Activated naive CD4-positive, alpha-beta T cell treated with anti-CD3 and anti-CD28 coated beads, Interleukin-2, amount 10 ng/mL, durations not matched to agents 7 days and 5 days (primary cell): ENCODE measurements at regions of chr9 and their contacts with region 1.

Region 1: DNA sequence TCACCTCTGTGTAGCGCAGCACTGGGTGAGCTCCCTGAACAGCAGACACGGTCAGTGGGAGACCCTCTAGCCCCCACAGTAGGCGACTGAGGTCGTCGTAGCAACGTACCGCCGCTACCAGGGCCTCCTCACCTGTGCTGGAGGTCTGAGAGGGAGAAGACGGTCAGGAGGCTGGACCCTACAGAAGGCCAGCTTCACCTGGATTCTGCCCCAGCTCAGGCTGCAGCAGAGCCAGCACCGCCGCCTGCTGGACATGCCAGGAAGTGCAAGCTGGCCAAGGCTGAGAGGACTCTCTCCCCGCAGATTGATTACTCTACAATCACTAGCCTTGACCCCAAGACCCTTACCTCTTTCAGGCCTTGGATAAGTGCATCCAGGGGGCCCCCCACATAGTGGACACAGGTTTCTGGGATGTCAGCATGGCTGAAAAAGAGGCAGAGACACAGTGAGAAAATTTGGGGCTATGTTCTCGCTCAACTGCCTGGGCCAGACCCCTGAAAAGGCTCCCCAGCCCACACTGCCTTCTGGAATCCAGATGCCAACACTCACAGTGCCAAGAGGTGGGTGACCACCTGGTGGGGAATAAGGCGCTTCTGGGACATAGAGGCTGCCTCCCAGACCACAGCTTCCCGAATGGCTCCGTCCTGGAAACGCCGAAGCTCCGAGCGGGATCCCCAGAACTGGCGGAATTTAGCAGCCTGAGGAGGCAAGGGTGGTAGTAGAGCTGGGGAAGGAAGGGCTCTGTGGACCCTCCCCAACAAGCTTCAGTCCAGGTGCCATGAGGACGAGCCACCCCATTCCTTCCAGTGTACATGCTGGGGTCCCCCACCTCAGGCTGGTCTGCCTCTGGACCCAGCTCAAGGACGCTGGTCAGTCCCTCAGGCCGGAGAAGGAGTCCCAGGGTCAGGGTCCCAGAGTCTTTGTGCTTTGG is 6.9 kb downstream of the NOL6 start:
- DNase-seq: peak; percentile 84
- H3K4me3 Mint-ChIP-seq: no peak overlapping the region
- H3K27ac Mint-ChIP-seq: peak overlapping the region; percentile 42
- H3K4me1 Mint-ChIP-seq: peaks cover 9% of the 10 kb centered on the region
- H3K27me3 Mint-ChIP-seq: no peaks in the 10 kb centered on the region

Region 2: GRCh38 chr9:33287087-33287490 is 179.7 kb before region 1 on chr9:
- CTCF ChIA-PET with region 1: interaction called, 23 read pairs
- DNase-seq: peak; percentile 72
- H3K4me3 Mint-ChIP-seq: no peak overlapping the region
- H3K27ac Mint-ChIP-seq: peak overlapping the region; percentile 79
- H3K4me1 Mint-ChIP-seq: peaks cover 41% of the 10 kb centered on the region
- H3K27me3 Mint-ChIP-seq: peaks cover 5% of the 10 kb centered on the region

Region 3: GRCh38 chr9:33480087-33480486 is 13.3 kb after region 1 on chr9:
- CTCF ChIA-PET with region 1: interaction called, 11 read pairs
- DNase-seq: no peak
- H3K4me3 Mint-ChIP-seq: no peak overlapping the region
- H3K27ac Mint-ChIP-seq: no peak overlapping the region
- H3K4me1 Mint-ChIP-seq: no peaks in the 10 kb centered on the region
- H3K27me3 Mint-ChIP-seq: no peaks in the 10 kb centered on the region